OCI-LY7 (cell line): ENCODE measurements at regions of chr1 and their contacts with region 1.

Region 1: DNA sequence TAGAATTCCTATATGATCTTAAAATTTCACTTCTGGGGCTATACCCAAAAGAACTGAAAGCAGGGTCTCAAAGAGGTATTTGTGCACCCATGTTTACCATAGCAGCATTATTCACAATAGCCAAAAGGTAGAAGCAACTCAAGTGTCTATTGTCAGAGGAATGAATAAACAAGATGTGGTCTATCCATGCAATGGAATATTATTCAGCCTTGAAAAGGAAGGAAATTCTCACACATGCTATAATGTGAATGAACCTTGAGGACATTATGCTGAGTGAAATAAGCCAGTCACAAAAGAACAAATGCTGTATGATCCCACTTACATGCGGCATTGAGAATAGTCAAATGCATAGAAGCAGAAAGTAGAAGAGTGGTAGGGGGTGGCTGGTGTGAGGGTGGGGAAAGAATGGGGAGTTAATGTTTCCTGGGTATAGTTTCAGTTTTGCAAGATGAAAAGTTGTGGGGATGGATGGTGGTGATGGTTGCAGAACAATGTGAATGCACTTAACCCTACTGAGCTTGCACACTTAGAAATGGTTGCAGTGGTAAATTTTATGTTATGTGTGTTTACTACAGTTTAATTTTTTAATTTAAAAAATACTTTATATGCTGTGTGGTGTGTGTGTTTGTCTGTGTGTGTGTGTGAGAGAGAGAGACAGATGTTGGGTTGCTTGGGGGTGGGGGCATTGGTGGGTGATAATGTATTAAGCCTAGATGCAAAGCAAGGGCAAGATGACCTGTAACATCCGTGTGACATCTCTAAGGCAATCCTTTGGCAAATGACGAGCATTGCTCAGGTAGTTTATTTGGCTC is 122.3 kb downstream of the TOMM20 start:
- DNase-seq: no peak
- H3K4me3 ChIP-seq: no peak overlapping the region
- H3K27ac ChIP-seq: peak overlapping the region; percentile 87
- H3K4me1 ChIP-seq: peaks cover 95% of the 10 kb centered on the region
- CTCF ChIP-seq: no peak

Region 2: GRCh38 chr1:234599617-234600417 is 406.5 kb before region 1 on chr1:
- CTCF ChIA-PET with region 1: no interaction called
- POLR2A ChIA-PET with region 1: interaction called, 3 read pairs
- intact Hi-C with region 1: loop called (anchors 2 kb)
- DNase-seq: peak; percentile 88
- H3K4me3 ChIP-seq: peak overlapping the region; percentile 69
- H3K27ac ChIP-seq: peak overlapping the region; percentile 93
- H3K4me1 ChIP-seq: peaks cover 69% of the 10 kb centered on the region
- CTCF ChIP-seq: 0 out of 2 replicates have a peak, but pooled peaks have one; percentile 15

Region 3: GRCh38 chr1:234842726-234843641 is 163.4 kb before region 1 on chr1:
- CTCF ChIA-PET with region 1: no interaction called
- POLR2A ChIA-PET with region 1: interaction called, 3 read pairs
- intact Hi-C with region 1: loop called (anchors 5 kb)
- DNase-seq: peak; percentile 66
- H3K4me3 ChIP-seq: peak overlapping the region; percentile 18
- H3K27ac ChIP-seq: peak overlapping the region; percentile 52
- H3K4me1 ChIP-seq: peaks cover 62% of the 10 kb centered on the region
- CTCF ChIP-seq: 0 out of 2 replicates have a peak, but pooled peaks have one; percentile 21

Region 4: DNA sequence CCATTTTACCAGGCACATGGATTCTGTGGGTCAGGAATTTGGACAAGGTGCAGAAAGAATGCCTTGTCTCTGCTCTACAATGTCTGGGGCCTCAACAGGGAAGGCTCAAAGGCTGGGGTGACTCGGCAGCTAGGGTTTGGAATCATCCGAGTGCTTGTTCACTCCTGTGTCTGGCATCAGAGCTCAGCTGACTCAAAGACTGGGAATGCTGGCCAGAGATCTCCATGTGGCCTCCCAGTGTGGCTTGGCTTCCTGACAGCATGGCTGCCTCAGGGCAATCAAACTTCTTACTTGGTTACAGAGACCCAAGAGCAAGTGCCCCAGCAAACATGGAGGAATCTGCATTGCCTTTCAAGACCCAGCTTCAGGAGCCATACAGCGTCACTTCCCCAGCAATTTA is 11.8 kb after region 1 on chr1:
- CTCF ChIA-PET with region 1: no interaction called
- POLR2A ChIA-PET with region 1: interaction called, 19 read pairs
- intact Hi-C with region 1: no loop called
- DNase-seq: no peak
- H3K4me3 ChIP-seq: no peak overlapping the region
- H3K27ac ChIP-seq: no peak overlapping the region
- H3K4me1 ChIP-seq: peaks cover 29% of the 10 kb centered on the region
- CTCF ChIP-seq: no peak

Region 5: GRCh38 chr1:235056937-235057336 is 50.6 kb after region 1 on chr1:
- CTCF ChIA-PET with region 1: no interaction called
- POLR2A ChIA-PET with region 1: no interaction called
- intact Hi-C with region 1: no loop called
- DNase-seq: no peak
- H3K4me3 ChIP-seq: no peak overlapping the region
- H3K27ac ChIP-seq: no peak overlapping the region
- H3K4me1 ChIP-seq: peaks cover 19% of the 10 kb centered on the region
- CTCF ChIP-seq: peak; percentile 34; the same call in 1 of the 2 replicates